GM13976 (cell line): ENCODE measurements at regions of chr3 and their contacts with region 1.

Region 1: DNA sequence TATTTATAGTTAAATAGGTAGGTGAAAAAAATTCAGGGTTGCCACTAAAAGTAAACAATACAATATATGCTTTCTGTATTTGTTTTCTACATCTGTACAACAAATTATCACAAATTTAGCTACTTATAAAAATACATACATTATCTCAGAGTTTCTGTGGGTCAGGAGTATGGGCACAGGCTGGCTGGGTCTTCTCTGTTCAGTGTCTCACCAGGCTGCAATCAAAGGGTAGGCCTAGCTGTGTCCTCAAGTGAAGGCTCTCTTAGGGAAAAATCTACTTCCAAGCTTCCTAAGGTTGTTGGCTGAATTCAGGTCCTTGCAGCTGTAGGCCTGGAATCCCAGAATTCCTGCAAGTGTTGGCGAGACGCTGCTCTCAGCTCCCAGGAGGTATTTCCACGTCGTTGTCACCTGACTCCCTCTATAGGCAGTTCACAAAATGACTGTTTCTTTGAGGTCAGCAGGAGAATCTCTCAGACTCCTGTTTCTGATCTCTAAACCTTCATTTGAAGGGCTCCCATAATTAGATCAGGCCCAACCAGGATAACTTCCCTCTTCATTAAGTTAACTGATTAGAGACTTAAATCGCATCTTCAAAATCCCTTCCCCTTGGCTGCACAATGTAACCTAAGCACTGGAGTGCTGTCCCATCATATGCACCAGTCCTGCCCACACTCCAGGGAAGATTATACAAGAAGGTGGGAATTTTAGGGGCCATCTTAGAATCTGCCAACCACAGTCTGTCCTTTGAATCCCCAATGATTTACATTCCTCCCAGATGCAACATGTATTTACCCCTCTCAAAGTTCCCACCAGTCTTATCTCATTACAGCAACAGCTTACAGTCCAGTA is 296.6 kb downstream of the SUCLG2 start:
- DNase-seq: peak; percentile 20
- CTCF ChIP-seq: peak; percentile 37

Region 2: GRCh38 chr3:65831733-65832425 is 1526.0 kb before region 1 on chr3:
- in situ Hi-C with region 1: no loop called
- DNase-seq: no peak
- CTCF ChIP-seq: no peak

Region 3: GRCh38 chr3:66998113-66998903 is 359.5 kb before region 1 on chr3 and contains the start of gene KBTBD8:
- in situ Hi-C with region 1: loop called (anchors 25 kb)
- DNase-seq: peak; percentile 95
- CTCF ChIP-seq: no peak

Region 4: GRCh38 chr3:67774676-67775075 is 416.8 kb after region 1 on chr3:
- in situ Hi-C with region 1: no loop called
- DNase-seq: no peak
- CTCF ChIP-seq: no peak

Region 5: GRCh38 chr3:68876112-68876713 is 1518.4 kb after region 1 on chr3:
- in situ Hi-C with region 1: loop called (anchors 25 kb)
- DNase-seq: peak; percentile 26
- CTCF ChIP-seq: peak; percentile 70